Dendritic cell treated with granulocyte-macrophage colony-stimulating factor and Interleukin-4, amounts not matched to agents 40 ng/mL and 50 ng/mL, for 4 days (primary cell): ENCODE measurements at regions of chr12 and their contacts with region 1.

Region 1: GRCh38 chr12:108367436-108367835 is 28.3 kb upstream of the CMKLR1 start:
- H3K4me3 Mint-ChIP-seq: no peak overlapping the region
- H3K27ac Mint-ChIP-seq: peak overlapping the region; percentile 14
- H3K4me1 Mint-ChIP-seq: peaks cover 83% of the 10 kb centered on the region
- H3K27me3 Mint-ChIP-seq: no peaks in the 10 kb centered on the region

Region 2: DNA sequence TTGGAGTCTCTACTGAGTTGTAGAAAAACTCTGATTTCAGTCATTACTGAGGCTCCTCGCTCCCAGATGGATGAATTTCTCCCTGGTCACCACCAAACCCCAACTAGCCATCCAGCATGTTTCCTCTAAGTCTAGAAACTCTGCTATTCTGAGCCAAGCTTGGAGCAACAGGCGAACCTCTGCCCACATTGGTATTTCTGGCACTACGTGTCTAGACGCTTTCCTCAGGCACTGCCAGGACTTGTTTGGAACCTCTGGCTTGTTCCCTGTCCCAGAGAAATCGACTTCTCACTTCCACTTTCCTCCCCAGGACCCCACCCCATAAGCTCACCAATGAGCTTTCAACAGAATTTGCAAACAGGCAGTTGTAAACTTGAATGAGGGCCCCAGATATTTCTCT is 210.7 kb before region 1 on chr12:
- intact Hi-C with region 1: no loop called
- H3K4me3 Mint-ChIP-seq: no peak overlapping the region
- H3K27ac Mint-ChIP-seq: no peak overlapping the region
- H3K4me1 Mint-ChIP-seq: no peaks in the 10 kb centered on the region
- H3K27me3 Mint-ChIP-seq: peaks cover 18% of the 10 kb centered on the region

Region 3: DNA sequence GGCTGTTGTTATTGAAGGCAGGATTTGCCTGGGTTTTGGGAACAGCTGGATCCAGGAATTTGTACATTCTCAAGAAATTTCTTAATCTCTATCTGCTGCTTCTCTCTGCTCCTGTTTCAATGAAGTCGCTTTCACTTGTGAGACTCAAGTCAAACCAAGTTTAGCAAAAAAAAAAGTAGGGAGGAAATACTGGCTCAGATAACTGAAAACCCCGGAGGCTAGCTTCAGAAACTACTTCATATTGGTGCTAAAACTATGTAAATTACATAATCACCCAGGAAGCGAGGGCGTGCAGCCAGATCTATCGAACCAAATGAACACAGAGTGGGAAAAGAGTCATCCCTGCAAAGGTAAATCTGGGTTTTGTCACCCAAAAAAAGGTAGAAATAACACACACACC is 79.3 kb after region 1 on chr12:
- intact Hi-C with region 1: loop called (anchors 10 kb)
- H3K4me3 Mint-ChIP-seq: no peak overlapping the region
- H3K27ac Mint-ChIP-seq: no peak overlapping the region
- H3K4me1 Mint-ChIP-seq: peaks cover 19% of the 10 kb centered on the region
- H3K27me3 Mint-ChIP-seq: peaks cover 46% of the 10 kb centered on the region

Region 4: DNA sequence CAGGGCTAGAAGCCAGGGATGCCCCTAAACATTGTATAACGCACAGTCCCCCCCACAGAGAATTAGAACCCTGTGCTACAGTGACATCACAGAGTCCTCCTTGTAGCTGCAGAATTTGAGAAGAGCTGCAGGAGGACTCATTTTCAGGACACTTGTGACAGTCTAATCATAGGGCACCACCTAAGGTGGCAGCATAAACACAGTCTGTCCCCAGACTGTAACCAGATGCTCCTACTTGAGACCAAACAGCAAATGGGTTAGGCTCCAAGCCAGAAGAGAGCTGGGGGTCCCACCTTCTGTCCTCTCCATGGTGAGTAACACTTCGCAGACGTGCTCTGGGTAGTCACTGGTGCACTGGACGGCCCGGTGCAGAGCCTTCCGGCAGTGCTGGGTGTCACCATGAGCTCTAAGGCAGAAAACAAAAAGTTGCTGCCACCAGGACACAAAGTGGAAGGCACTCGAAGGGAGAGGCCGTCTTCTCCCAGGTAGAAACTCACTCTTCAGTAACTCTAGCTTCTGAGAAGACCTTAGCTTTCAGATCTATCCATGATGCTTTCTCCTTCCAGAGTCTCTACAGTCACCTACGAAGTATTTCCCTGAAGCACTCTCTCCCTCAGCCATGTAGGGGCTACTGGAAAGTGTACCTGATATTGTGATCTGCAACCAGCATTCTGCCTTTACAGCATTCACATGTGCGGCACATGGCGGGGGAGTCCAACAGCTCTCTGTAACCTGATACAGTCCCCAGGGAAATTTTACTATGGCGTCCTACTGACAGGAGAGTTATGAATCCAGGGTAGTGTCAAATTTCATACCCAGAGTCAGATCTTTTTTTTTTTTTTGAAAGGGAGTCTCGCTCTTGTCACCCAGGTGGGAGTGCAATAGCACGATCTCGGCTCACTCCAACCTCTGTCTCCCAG is 164.8 kb after region 1 on chr12:
- intact Hi-C with region 1: no loop called
- H3K4me3 Mint-ChIP-seq: no peak overlapping the region
- H3K27ac Mint-ChIP-seq: no peak overlapping the region
- H3K4me1 Mint-ChIP-seq: no peaks in the 10 kb centered on the region
- H3K27me3 Mint-ChIP-seq: no peaks in the 10 kb centered on the region